Mammary epithelial cell (primary cell): ENCODE measurements at regions of chr4 and their contacts with region 1.

Region 1: GRCh38 chr4:78612398-78613178 is 61.0 kb downstream of the ANXA3 start:
- DNase-seq: no peak
- H3K4me3 ChIP-seq: no peak overlapping the region
- H3K27ac ChIP-seq: no peak overlapping the region
- H3K4me1 ChIP-seq: peaks cover 4% of the 10 kb centered on the region
- H3K27me3 ChIP-seq: no peaks in the 10 kb centered on the region
- CTCF ChIP-seq: peak; percentile 33 to 66

Region 2: GRCh38 chr4:77959566-77960338 is 652.8 kb before region 1 on chr4:
- CTCF ChIA-PET with region 1: no interaction called
- dilution Hi-C with region 1: no loop called
- in situ Hi-C with region 1: no loop called
- intact Hi-C with region 1: loop called (anchors 10 kb)
- DNase-seq: peak; percentile 25
- H3K4me3 ChIP-seq: no peak overlapping the region
- H3K27ac ChIP-seq: no peak overlapping the region
- H3K4me1 ChIP-seq: no peaks in the 10 kb centered on the region
- H3K27me3 ChIP-seq: no peaks in the 10 kb centered on the region
- CTCF ChIP-seq: peak; percentile 50 to 58

Region 3: GRCh38 chr4:78864405-78865024 is 251.9 kb after region 1 on chr4:
- CTCF ChIA-PET with region 1: no interaction called
- dilution Hi-C with region 1: loop called (anchors 25 kb)
- in situ Hi-C with region 1: loop called (anchors 5 to 25 kb)
- intact Hi-C with region 1: loop called (anchors 1 kb)
- DNase-seq: peak; percentile 58
- H3K4me3 ChIP-seq: no peak overlapping the region
- H3K27ac ChIP-seq: no peak overlapping the region
- H3K4me1 ChIP-seq: no peaks in the 10 kb centered on the region
- H3K27me3 ChIP-seq: no peaks in the 10 kb centered on the region
- CTCF ChIP-seq: peak; percentile 73